Activated CD8-positive, alpha-beta T cell treated with anti-CD3 and anti-CD28 coated beads for 36 hours (primary cell): ENCODE measurements at regions of chr6 and their contacts with region 1.

Region 1: GRCh38 chr6:150685860-150686259 is 86.2 kb downstream of the PLEKHG1 start:
- DNase-seq: peak; percentile 68
- ATAC-seq: peak; percentile 92
- H3K4me3 Mint-ChIP-seq: no peak overlapping the region
- H3K27ac Mint-ChIP-seq: no peak overlapping the region
- H3K4me1 Mint-ChIP-seq: no peaks in the 10 kb centered on the region
- H3K27me3 Mint-ChIP-seq: no peaks in the 10 kb centered on the region
- CTCF ChIP-seq: peak; percentile 78

Region 2: DNA sequence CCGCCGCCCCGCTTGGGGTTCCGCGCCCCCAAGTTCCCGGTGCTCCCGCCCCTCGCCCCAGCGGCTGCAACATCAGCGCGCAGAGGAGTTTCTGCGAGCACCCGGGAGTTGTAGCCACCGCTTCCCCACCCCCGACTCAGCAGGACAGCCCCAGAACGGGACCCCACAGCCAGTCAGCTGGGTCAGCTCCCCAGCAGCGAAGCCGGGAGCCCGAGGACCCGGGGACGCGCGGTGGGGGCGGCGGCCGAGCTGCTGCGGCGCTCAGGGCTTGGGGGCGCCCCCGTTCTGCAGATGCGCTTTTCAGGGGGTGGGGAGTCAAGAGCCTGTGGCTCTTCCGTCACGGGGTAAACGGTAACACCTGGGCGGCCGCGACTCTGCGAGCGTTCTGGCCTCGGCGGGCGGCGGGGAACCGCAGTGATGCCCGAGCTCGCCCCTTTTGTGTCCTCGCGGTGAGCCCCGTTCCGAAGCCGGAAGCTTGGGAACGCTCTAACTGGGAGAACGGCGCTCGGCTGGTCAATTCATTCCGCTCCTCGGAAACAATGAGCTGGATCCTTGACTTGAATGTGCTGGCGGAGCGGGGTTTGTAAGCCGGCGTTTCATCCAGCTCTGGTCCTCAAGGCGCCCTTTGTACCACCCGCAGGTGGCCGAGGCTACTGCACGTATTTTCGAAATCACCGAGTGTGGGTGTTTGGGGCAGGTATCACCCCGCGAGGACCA is 85.4 kb before region 1 on chr6:
- CTCF ChIA-PET with region 1: interaction called, 14 read pairs
- POLR2A ChIA-PET with region 1: interaction called, 3 read pairs
- intact Hi-C with region 1: no loop called
- DNase-seq: peak; percentile 88
- ATAC-seq: peak; percentile 73
- H3K4me3 Mint-ChIP-seq: peak overlapping the region; percentile 79
- H3K27ac Mint-ChIP-seq: peak overlapping the region; percentile 75
- H3K4me1 Mint-ChIP-seq: peaks cover 15% of the 10 kb centered on the region
- H3K27me3 Mint-ChIP-seq: peaks cover 24% of the 10 kb centered on the region
- CTCF ChIP-seq: peak; percentile 69

Region 3: GRCh38 chr6:150696190-150696589 is 10.3 kb after region 1 on chr6:
- CTCF ChIA-PET with region 1: interaction called, 20 read pairs
- POLR2A ChIA-PET with region 1: no interaction called
- intact Hi-C with region 1: no loop called
- DNase-seq: no peak
- ATAC-seq: no peak
- H3K4me3 Mint-ChIP-seq: no peak overlapping the region
- H3K27ac Mint-ChIP-seq: no peak overlapping the region
- H3K4me1 Mint-ChIP-seq: no peaks in the 10 kb centered on the region
- H3K27me3 Mint-ChIP-seq: no peaks in the 10 kb centered on the region
- CTCF ChIP-seq: no peak